ENCODE measurements at regions of chr18 and their contacts with region 1.

Region 1: DNA sequence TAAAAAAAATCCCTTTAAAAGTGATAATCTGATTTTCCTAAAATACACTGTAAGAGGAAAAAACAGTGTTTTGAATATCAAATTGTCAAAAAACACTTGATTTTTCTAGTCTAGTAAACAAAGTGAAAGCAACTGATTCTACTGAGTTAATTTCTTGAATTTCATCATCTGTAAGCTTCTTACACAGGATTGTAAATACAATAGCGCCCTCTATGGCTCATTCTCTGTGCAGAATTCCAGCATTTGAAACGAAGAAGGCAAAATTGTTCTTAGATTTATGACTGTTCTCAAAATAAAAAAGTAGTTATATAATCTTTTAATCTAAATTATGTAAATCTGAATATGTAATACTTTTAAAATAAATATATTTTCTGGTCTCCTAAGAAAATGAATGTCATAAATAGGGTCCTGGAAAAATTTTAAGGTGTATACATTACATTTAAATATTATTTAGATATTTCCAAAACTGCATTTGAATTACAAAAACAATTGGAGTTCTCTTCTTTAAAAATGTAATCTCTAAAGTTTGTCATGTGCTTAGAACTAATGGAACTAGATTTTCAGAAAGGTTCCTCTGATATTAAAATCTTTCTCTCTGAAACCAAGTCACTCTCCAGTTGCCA is 176.9 kb upstream of the MC4R start:
- DNase-seq: peak; percentile 6 to 42 (median 10)
- ATAC-seq: 0 out of 3 replicates have a peak, but pooled peaks have one; percentile 38
- H3K4me3 ChIP-seq: no peak overlapping the region
- H3K27ac ChIP-seq: no peak overlapping the region
- H3K4me1 ChIP-seq: no peaks in the 10 kb centered on the region; a peak in 1 of 5 replicates
- H3K27me3 ChIP-seq: no peaks in the 10 kb centered on the region
- CTCF ChIP-seq: peak in 2 of 3 experiments; percentile 27 to 61; a peak in 3 of 6 replicates
- EP300 ChIP-seq: no peak
- POLR2A ChIP-seq: no peak
- RAD21 ChIP-seq: peak; percentile 81 to 82

Region 2: DNA sequence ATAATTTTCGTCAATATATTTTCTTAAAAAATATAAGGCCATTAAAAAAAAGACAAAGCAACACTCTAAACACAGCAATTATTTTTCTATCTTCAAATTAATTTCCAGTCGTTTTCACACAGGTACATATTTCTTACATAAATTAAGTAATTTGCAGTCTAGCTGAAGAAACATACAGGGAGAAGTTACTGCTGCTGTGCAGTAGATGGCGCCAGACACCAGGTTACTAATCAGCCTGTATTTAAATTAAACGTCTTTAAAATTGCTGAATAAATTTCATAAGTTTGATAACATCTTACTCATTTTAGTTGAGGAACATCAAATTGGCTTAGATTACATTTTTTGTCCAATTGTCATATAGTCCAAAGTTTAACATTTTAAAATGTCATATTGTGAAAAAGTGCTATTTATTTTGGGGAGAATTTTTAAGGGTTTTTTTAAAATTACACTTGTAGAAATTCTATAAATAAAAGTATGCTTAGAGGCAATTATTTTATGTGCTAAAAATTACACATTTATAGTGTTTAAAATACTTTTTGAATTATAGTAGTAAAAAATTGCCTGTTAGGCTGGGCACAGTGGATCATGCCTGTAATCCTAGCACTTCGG is 561.2 kb before region 1 on chr18:
- CTCF ChIA-PET with region 1: interaction called, 8 read pairs
- POLR2A ChIA-PET with region 1: no interaction called
- in situ Hi-C with region 1: loop called (anchors 10 kb)
- intact Hi-C with region 1: loop called (anchors 2 kb)
- DNase-seq: peak; percentile 21 to 52 (median 22)
- ATAC-seq: 0 out of 3 replicates have a peak, but pooled peaks have one; percentile 52
- H3K4me3 ChIP-seq: no peak overlapping the region
- H3K27ac ChIP-seq: no peak overlapping the region
- H3K4me1 ChIP-seq: no peaks in the 10 kb centered on the region
- H3K27me3 ChIP-seq: no peaks in the 10 kb centered on the region
- CTCF ChIP-seq: peak; percentile 55 to 84 (median 64); a peak in 5 of 6 replicates
- EP300 ChIP-seq: no peak
- POLR2A ChIP-seq: no peak
- RAD21 ChIP-seq: peak; percentile 85 to 90

Region 3: DNA sequence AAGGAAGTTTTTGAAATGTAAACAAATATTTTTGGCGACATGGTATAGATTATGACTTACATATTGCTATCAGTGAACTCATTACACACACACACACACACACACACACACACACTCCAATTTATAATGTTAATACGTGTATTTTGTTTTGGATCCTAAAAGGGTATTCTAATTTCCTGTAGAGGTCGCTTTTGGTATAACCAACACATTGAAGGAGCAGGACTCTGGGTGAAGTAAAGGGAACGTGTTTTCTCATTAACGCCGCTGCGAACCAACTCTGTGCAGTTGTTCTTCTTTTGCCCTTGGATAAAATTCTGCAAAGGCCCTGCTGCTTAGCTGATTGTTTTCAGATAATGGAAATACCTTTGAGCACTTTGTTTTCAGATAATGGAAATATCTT is 459.3 kb before region 1 on chr18:
- CTCF ChIA-PET with region 1: no interaction called
- POLR2A ChIA-PET with region 1: no interaction called
- in situ Hi-C with region 1: no loop called
- intact Hi-C with region 1: loop called (anchors 10 kb)
- DNase-seq: peak in 2 of 4 experiments; percentile 11 to 16
- ATAC-seq: peak; percentile 78
- H3K4me3 ChIP-seq: no peak overlapping the region
- H3K27ac ChIP-seq: no peak overlapping the region
- H3K4me1 ChIP-seq: no peaks in the 10 kb centered on the region
- H3K27me3 ChIP-seq: 0 out of 5 replicates have a peak, but pooled peaks cover 0 to 5% of the 10 kb centered on the region in 2 experiments
- CTCF ChIP-seq: peak in 1 of 3 experiments; percentile 39; a peak in 2 of 6 replicates
- EP300 ChIP-seq: no peak
- POLR2A ChIP-seq: no peak
- RAD21 ChIP-seq: peak in 1 of 2 experiments; percentile 29; a peak in 1 of 4 replicates

Region 4: GRCh38 chr18:60452421-60452820 is 97.0 kb before region 1 on chr18:
- CTCF ChIA-PET with region 1: no interaction called
- POLR2A ChIA-PET with region 1: no interaction called
- in situ Hi-C with region 1: no loop called
- intact Hi-C with region 1: no loop called
- DNase-seq: no peak
- ATAC-seq: no peak
- H3K4me3 ChIP-seq: no peak overlapping the region
- H3K27ac ChIP-seq: no peak overlapping the region
- H3K4me1 ChIP-seq: no peaks in the 10 kb centered on the region
- H3K27me3 ChIP-seq: no peaks in the 10 kb centered on the region
- CTCF ChIP-seq: no peak
- EP300 ChIP-seq: no peak
- POLR2A ChIP-seq: no peak
- RAD21 ChIP-seq: no peak

Region 5: DNA sequence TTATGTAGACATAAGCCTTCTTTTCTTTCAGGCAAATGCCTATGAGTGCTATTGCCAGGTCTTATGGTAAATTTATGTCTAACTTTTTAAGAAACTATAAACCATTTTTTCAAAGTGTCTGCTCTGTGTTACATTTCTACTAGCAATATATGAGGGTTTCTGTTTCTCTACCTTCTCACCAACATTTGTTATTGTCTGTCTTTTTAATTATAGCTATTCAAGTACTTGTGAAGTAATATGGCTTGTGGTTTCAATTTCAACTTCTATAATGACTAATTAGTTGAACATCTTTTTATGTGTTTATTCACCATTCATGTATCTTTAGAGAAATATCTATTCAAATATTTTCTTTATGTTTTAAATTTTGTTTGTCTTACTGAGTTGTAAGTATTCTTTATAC is 36.2 kb after region 1 on chr18:
- CTCF ChIA-PET with region 1: no interaction called
- POLR2A ChIA-PET with region 1: no interaction called
- in situ Hi-C with region 1: no loop called
- intact Hi-C with region 1: no loop called
- DNase-seq: no peak
- ATAC-seq: no peak
- H3K4me3 ChIP-seq: no peak overlapping the region
- H3K27ac ChIP-seq: no peak overlapping the region
- H3K4me1 ChIP-seq: no peaks in the 10 kb centered on the region
- H3K27me3 ChIP-seq: no peaks in the 10 kb centered on the region
- CTCF ChIP-seq: no peak
- EP300 ChIP-seq: no peak
- POLR2A ChIP-seq: no peak
- RAD21 ChIP-seq: no peak

Measured in K562 (cell line).